ENCODE measurements at regions of chr17 and their contacts with region 1.

Region 1: GRCh38 chr17:28896884-28897768 is at the start of gene FLOT2:
- DNase-seq: peak; percentile 65 to 81 (median 74)
- H3K4me3 ChIP-seq: peak within 1 kb of the TSS; percentile 86 to 90
- H3K4me3 Mint-ChIP-seq: peak within 1 kb of the TSS; percentile 91 to 98 (median 96)
- H3K27ac ChIP-seq: peak within 1 kb of the TSS; percentile 88
- H3K27ac Mint-ChIP-seq: peak within 1 kb of the TSS; percentile 95 to 100 (median 96)
- H3K4me1 ChIP-seq: peaks cover 73% of the 10 kb centered on the region
- H3K4me1 Mint-ChIP-seq: peaks cover 47 to 83% (median 65%) of the 10 kb centered on the region in 4 donors
- H3K27me3 ChIP-seq: no peaks in the 10 kb centered on the region
- H3K27me3 Mint-ChIP-seq: no peaks in the 10 kb centered on the region
- total RNA-seq, gene FLOT2: 216 to 224 TPM

Region 2: DNA sequence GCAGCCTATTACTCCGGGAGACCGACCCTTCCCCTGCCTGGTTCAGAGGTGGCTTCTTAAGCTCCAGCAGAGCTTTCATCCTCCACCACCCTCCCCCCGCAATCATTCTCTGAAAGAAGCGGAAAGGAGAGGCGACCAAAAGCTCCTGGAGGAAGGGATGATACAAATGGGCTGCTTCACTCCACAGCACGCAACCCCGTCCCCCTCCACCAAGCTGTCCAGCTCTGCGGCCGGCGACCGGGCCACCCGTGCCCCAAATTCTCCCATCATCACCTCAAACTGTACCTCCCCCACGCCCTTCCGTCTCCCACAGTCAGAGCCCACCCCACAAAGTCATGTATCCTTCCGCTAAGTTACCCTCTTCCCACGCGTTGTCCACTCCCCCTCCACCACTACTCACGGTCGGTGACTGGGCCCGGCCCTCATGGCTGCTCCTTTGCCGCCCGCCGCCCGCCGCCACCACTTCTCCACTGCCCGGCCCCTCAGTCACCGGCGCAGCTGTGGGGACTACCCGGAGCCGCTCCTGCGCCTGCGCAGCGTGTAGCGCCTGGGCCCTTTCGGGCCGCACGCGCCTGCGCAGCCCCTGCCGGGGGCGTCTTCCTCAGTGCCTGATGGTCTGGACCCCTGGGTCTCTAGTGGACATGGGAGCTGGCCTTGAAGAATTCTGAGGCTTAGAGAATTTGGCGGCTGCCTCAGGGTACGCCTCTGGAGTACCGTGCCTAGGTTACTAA is 54.7 kb before region 1 on chr17 and contains the start of gene FAM222B:
- CTCF ChIA-PET with region 1: interaction called, 11 read pairs
- POLR2A ChIA-PET with region 1: interaction called, 13 read pairs
- intact Hi-C with region 1: no loop called
- DNase-seq: peak; percentile 85 to 87 (median 87)
- H3K4me3 ChIP-seq: peak within 1 kb of the TSS; percentile 55 to 87
- H3K4me3 Mint-ChIP-seq: peak within 1 kb of the TSS; percentile 93 to 100 (median 98)
- H3K27ac ChIP-seq: peak within 1 kb of the TSS; percentile 84
- H3K27ac Mint-ChIP-seq: peak within 1 kb of the TSS; percentile 93 to 99 (median 98)
- H3K4me1 ChIP-seq: peaks cover 25% of the 10 kb centered on the region
- H3K4me1 Mint-ChIP-seq: peaks cover 15 to 26% (median 21%) of the 10 kb centered on the region in 4 donors
- H3K27me3 ChIP-seq: no peaks in the 10 kb centered on the region
- H3K27me3 Mint-ChIP-seq: no peaks in the 10 kb centered on the region
- total RNA-seq, gene FAM222B: 19.0 to 23.0 TPM

Region 3: DNA sequence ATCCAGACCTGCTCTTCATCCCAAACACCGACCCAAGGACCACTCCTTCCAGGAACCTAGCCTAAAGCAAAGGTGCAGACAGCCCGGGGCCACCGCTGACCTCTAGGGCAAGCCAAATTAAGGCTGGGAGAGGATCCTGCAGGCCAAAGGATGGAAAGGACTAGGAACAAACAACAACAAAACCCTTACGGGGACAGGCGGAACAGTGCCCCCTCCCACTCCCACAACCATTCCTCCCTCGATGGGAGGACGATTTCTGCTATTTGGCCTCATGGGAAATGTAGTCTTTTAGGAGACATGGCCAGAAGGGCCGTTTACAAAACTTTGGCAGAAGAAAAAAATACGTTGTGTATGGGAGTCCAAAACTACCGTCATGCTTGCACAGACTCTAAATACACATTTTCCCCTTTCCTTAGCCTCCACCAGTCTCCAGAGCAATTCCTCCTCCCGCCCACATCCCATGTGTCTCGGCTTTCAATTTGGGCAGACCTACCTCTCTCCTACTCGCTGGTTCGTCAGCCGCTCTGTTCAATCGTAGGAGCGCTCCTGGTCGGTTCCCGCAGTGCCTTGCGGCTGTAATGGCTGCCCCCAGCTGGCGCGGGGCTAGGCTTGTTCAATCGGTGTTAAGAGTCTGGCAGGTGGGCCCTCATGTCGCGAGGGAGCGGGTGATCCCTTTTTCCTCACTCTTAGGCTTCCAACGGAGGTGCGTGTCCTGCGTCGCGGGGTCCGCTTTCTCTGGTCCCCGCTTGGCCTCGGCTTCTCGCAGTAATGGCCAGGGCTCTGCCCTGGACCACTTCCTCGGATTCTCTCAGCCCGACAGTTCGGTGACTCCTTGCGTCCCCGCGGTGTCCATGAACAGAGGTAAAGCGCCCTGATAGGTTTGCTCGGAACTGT is 42.4 kb before region 1 on chr17 and contains the start of gene ERAL1:
- CTCF ChIA-PET with region 1: interaction called, 14 read pairs
- POLR2A ChIA-PET with region 1: interaction called, 11 read pairs
- intact Hi-C with region 1: no loop called
- DNase-seq: peak; percentile 82 to 90 (median 85)
- H3K4me3 ChIP-seq: peak within 1 kb of the TSS; percentile 88 to 91
- H3K4me3 Mint-ChIP-seq: peak within 1 kb of the TSS; percentile 90 to 98 (median 95)
- H3K27ac ChIP-seq: peak within 1 kb of the TSS; percentile 73
- H3K27ac Mint-ChIP-seq: peak within 1 kb of the TSS; percentile 82 to 96 (median 94)
- H3K4me1 ChIP-seq: peaks cover 13% of the 10 kb centered on the region
- H3K4me1 Mint-ChIP-seq: peaks cover 4 to 19% (median 11%) of the 10 kb centered on the region in 4 donors
- H3K27me3 ChIP-seq: no peaks in the 10 kb centered on the region
- H3K27me3 Mint-ChIP-seq: no peaks in the 10 kb centered on the region
- total RNA-seq, gene ERAL1: 23.5 to 24.3 TPM

Region 4: GRCh38 chr17:28878981-28879380 is 18.1 kb before region 1 on chr17:
- CTCF ChIA-PET with region 1: interaction called, 3 read pairs
- POLR2A ChIA-PET with region 1: interaction called, 11 read pairs
- intact Hi-C with region 1: loop called (anchors 2 kb)
- DNase-seq: no peak
- H3K4me3 ChIP-seq: no peak overlapping the region
- H3K4me3 Mint-ChIP-seq: no peak overlapping the region
- H3K27ac ChIP-seq: no peak overlapping the region
- H3K27ac Mint-ChIP-seq: peak overlapping the region in 1 of 7 donors; percentile 41
- H3K4me1 ChIP-seq: no peaks in the 10 kb centered on the region
- H3K4me1 Mint-ChIP-seq: peaks cover 0 to 3% (median 0%) of the 10 kb centered on the region in 4 donors
- H3K27me3 ChIP-seq: no peaks in the 10 kb centered on the region
- H3K27me3 Mint-ChIP-seq: no peaks in the 10 kb centered on the region

Region 5: GRCh38 chr17:28925912-28926365 is 28.8 kb after region 1 on chr17:
- CTCF ChIA-PET with region 1: interaction called, 8 read pairs
- POLR2A ChIA-PET with region 1: interaction called, 13 read pairs
- intact Hi-C with region 1: loop called (anchors 1 kb)
- DNase-seq: peak; percentile 87 to 92 (median 89)
- H3K4me3 ChIP-seq: peak overlapping the region in 1 of 2 donors; percentile 15
- H3K4me3 Mint-ChIP-seq: peak overlapping the region; percentile 49 to 80 (median 60)
- H3K27ac ChIP-seq: peak overlapping the region; percentile 77
- H3K27ac Mint-ChIP-seq: peak overlapping the region; percentile 90 to 98 (median 96)
- H3K4me1 ChIP-seq: peaks cover 56% of the 10 kb centered on the region
- H3K4me1 Mint-ChIP-seq: peaks cover 49 to 79% (median 59%) of the 10 kb centered on the region in 4 donors
- H3K27me3 ChIP-seq: no peaks in the 10 kb centered on the region
- H3K27me3 Mint-ChIP-seq: no peaks in the 10 kb centered on the region

Measured in CD4-positive, alpha-beta memory T cell (primary cell).